Panc1 (cell line): ENCODE measurements at regions of chr3 and their contacts with region 1.

Region 1: GRCh38 chr3:149162007-149162406 is 32.6 kb downstream of the HPS3 start:
- DNase-seq: no peak
- ATAC-seq: no peak
- H3K4me3 ChIP-seq: no peak overlapping the region
- H3K27ac ChIP-seq: no peak overlapping the region
- H3K4me1 ChIP-seq: no peaks in the 10 kb centered on the region
- H3K27me3 ChIP-seq: no peaks in the 10 kb centered on the region
- CTCF ChIP-seq: no peak

Region 2: DNA sequence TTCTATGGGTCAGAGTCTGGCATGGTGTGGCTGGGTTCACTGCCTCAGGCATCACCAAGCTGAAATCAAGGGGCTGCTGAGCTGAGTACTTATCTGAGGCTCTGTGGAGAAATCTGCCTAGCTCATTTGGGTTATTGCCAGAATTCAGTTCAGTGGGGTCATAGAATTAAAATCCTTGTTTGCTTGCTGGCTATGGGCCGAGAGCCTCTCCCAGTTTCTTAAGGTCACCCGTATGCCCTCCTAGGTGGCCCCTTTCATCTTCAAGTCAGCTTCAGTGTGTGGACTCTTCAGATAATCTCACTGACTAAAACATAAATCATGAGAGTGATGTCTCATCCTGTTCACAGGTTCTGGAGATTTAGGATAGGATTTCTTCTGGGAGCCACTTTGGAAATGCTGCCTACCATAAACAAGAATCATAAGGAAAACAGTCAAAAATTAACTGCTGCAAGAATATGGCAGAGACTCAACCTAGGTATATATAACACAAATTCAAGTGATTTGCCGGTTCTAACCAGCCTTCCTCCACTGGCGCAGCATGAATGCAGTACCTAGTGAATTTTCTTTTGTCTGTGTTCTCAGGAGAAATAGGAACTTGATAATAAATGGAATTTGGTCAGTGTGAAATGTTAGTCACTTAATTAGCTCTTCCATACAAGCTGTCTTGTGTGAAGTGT is 54.3 kb after region 1 on chr3:
- CTCF ChIA-PET with region 1: no interaction called
- POLR2A ChIA-PET with region 1: interaction called, 17 read pairs
- in situ Hi-C with region 1: no loop called
- intact Hi-C with region 1: no loop called
- DNase-seq: no peak
- ATAC-seq: peak; percentile 79
- H3K4me3 ChIP-seq: no peak overlapping the region
- H3K27ac ChIP-seq: peak overlapping the region; percentile 77
- H3K4me1 ChIP-seq: peaks cover 38% of the 10 kb centered on the region
- H3K27me3 ChIP-seq: no peaks in the 10 kb centered on the region
- CTCF ChIP-seq: no peak

Region 3: DNA sequence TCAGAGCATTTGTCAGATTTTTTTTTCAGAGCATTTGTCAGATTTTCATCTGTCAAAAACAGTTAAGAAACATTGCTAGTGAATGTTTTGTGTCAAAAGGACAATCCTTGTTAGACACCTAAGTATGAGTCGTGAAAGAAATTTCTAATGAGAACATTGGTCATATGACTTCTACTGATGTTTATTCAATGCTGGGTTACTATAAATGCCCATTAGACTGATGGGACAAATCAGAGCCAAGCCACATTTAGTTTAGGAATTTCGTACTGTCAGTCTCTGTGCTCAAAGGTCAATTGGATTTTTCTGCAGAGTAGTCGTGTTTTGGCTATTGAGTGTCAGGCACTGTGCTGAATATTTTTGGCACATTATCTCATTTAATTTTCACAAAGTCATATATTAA is 1277.7 kb after region 1 on chr3:
- CTCF ChIA-PET with region 1: no interaction called
- POLR2A ChIA-PET with region 1: interaction called, 11 read pairs
- in situ Hi-C with region 1: no loop called
- intact Hi-C with region 1: no loop called
- DNase-seq: peak; percentile 45
- ATAC-seq: peak; percentile 44; the same call in 1 of the 2 replicates
- H3K4me3 ChIP-seq: no peak overlapping the region
- H3K27ac ChIP-seq: 0 out of 2 replicates have a peak overlapping the region, but pooled peaks have one; percentile 12
- H3K4me1 ChIP-seq: peaks cover 40% of the 10 kb centered on the region; the same call in 1 of the 2 replicates
- H3K27me3 ChIP-seq: no peaks in the 10 kb centered on the region
- CTCF ChIP-seq: no peak